Uterus (tissue), 4 donors: ENCODE measurements at regions of chr9 and their contacts with region 1.

Region 1: GRCh38 chr9:18255158-18255629 is 218.8 kb upstream of the ADAMTSL1 start:
- DNase-seq: peak; percentile 80 to 89
- H3K4me3 ChIP-seq: no peak overlapping the region
- H3K27ac ChIP-seq: peak overlapping the region in 1 of 2 donors; percentile 24
- H3K4me1 ChIP-seq: peaks cover 0 to 3% of the 10 kb centered on the region in 2 donors
- H3K27me3 ChIP-seq: no peaks in the 10 kb centered on the region
- CTCF ChIP-seq: peak; percentile 90 to 95 (median 91)
- POLR2A ChIP-seq: no peak

Region 2: DNA sequence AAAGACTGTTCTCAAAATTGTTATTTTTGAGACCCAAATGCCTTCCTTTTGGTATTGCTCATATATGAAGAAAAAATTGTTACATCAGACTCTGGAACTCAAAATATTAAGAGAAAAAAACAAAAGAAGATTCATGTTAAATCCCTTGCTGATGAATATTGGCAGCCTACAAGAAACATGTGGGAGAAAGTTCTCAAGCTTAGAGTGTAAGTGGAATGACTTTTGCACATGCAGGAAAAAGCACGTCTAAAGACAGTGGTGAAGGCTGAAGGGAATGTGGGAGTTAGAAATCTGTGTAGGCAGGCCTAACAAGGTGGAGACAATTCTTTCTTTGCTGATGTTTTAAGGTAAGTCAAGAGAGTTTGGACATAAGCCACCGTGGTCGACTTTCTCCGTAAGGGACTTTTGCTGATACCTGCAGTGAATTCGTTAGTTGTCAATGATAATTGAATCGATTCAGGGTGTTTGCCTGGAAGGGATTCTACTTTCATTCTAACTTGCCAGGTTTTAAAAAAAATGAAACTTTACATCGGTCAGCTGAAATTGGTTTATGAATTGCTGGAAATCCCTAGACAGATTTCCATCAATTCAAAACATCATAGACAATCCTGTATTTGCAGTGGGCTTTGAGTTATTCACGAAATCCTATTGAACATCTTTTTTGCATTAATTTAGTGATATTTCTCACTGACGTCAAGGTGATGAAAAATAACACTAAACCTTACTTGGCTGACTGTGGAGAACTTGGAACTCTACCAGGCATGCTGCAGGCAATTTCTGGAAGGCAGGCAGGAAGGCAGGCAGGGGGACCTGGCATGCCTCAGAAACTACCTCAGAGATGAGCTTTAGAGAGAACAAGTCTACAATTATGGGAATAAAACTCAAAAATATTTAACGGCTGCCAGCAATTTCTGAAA is 140.4 kb before region 1 on chr9:
- intact Hi-C with region 1: no loop called
- DNase-seq: peak; percentile 32 to 33
- H3K4me3 ChIP-seq: no peak overlapping the region
- H3K27ac ChIP-seq: peak overlapping the region; percentile 59 to 62
- H3K4me1 ChIP-seq: no peaks in the 10 kb centered on the region
- H3K27me3 ChIP-seq: no peaks in the 10 kb centered on the region
- CTCF ChIP-seq: no peak
- POLR2A ChIP-seq: no peak

Region 3: DNA sequence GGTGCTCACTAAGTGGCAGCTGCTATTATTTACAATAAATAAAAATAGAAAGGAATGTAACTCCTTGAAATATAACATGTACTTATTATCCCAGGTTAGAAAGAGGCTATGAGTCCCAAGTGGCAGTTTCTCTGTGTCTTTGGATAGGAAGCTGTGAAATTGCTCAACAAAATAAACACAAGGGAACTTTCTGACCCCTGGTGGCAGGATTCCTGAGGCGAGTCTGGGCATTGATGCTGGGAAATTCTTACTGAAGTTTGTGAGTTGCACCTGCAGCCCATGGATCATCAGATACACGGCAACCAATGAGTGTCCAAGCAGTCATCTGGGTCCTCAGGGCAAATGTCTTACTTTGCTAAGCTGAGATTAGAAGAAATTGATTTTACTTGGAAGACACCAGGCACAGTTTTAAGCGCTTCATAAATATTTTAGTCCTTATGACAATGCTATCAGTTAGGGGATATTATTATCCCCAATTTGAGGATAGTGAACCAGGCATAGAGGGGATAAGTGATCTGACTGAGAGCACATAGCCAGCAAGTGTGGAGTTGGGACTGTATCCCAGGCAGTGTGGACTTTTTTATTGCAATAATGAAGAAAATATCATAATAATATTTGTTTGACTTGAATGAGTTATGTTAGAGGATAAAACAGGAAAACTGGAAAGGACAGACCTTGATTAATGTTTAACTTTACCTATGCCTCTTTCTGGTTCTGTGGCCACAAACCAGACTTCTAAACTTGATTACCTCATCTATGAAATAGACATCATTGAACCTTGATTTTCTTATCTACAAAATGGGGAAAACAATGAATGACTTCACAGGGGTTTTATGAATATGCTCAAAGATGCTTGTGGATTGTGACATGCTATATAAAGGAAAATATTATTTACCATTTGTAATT is 46.8 kb before region 1 on chr9:
- intact Hi-C with region 1: no loop called
- DNase-seq: peak; percentile 52 to 70
- H3K4me3 ChIP-seq: no peak overlapping the region
- H3K27ac ChIP-seq: no peak overlapping the region
- H3K4me1 ChIP-seq: peaks cover 0 to 3% of the 10 kb centered on the region in 2 donors
- H3K27me3 ChIP-seq: no peaks in the 10 kb centered on the region
- CTCF ChIP-seq: peak; percentile 50 to 67 (median 61)
- POLR2A ChIP-seq: no peak

Region 4: DNA sequence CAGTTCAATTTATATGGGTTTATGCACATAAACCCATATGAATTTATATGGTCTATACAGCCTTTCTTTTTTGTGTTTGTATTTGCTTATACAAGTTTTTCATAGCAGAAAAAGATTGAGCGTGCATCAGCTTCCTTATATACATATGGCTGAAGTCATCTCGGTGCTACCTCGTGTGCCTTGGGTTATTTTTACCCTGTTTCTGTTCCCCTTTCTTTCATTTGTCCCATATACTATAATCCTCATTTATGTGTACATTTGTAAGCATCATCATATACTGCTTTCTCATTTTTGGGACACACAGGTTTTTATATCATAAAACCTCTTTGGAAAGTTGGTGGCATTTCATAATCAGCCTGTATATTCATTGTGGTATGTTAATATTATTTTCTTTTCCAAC is 111.0 kb after region 1 on chr9:
- intact Hi-C with region 1: no loop called
- DNase-seq: no peak
- H3K4me3 ChIP-seq: no peak overlapping the region
- H3K27ac ChIP-seq: no peak overlapping the region
- H3K4me1 ChIP-seq: no peaks in the 10 kb centered on the region
- H3K27me3 ChIP-seq: no peaks in the 10 kb centered on the region
- CTCF ChIP-seq: no peak
- POLR2A ChIP-seq: no peak

Region 5: GRCh38 chr9:18442629-18443491 is 187.7 kb after region 1 on chr9:
- intact Hi-C with region 1: loop called (anchors 10 kb)
- DNase-seq: peak; percentile 71 to 82
- H3K4me3 ChIP-seq: no peak overlapping the region
- H3K27ac ChIP-seq: peak overlapping the region; percentile 51 to 63
- H3K4me1 ChIP-seq: peaks cover 0 to 6% of the 10 kb centered on the region in 2 donors
- H3K27me3 ChIP-seq: no peaks in the 10 kb centered on the region
- CTCF ChIP-seq: peak; percentile 77 to 90 (median 83)
- POLR2A ChIP-seq: no peak

Region 6: DNA sequence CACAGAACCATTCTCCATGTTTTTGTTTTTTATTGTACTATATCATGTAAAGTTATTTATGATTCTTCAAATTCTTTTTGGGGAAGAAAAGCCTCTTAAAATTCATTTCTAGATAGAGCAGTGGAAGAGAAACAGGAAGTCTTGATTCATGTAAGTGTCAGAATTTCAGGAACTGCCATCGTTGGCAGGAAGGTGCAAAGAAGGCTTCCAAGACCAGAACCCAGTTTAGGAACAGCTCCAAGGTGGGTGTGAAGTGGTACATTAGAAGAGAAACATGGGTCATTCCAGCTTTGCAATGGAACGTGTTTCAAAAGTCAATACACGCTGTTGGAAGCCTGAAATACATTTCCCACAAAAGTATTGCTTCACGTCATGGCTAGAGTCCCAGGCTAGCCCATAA is 763.0 kb after region 1 on chr9:
- intact Hi-C with region 1: loop called (anchors 10 kb)
- DNase-seq: no peak
- H3K4me3 ChIP-seq: no peak overlapping the region
- H3K27ac ChIP-seq: no peak overlapping the region
- H3K4me1 ChIP-seq: no peaks in the 10 kb centered on the region
- H3K27me3 ChIP-seq: no peaks in the 10 kb centered on the region
- CTCF ChIP-seq: no peak
- POLR2A ChIP-seq: no peak